Left ventricle myocardium inferior (tissue), 1 donor: ENCODE measurements at regions of chr19 and their contacts with region 1.

Region 1: GRCh38 chr19:3429581-3430080 is 50.7 kb downstream of the SMIM24 start:
- DNase-seq: peak; percentile 91
- H3K4me3 ChIP-seq: no peak overlapping the region
- H3K27ac ChIP-seq: peak overlapping the region; percentile 94
- H3K4me1 ChIP-seq: peaks cover 65% of the 10 kb centered on the region
- H3K27me3 ChIP-seq: no peaks in the 10 kb centered on the region
- CTCF ChIP-seq: peak; percentile 100

Region 2: DNA sequence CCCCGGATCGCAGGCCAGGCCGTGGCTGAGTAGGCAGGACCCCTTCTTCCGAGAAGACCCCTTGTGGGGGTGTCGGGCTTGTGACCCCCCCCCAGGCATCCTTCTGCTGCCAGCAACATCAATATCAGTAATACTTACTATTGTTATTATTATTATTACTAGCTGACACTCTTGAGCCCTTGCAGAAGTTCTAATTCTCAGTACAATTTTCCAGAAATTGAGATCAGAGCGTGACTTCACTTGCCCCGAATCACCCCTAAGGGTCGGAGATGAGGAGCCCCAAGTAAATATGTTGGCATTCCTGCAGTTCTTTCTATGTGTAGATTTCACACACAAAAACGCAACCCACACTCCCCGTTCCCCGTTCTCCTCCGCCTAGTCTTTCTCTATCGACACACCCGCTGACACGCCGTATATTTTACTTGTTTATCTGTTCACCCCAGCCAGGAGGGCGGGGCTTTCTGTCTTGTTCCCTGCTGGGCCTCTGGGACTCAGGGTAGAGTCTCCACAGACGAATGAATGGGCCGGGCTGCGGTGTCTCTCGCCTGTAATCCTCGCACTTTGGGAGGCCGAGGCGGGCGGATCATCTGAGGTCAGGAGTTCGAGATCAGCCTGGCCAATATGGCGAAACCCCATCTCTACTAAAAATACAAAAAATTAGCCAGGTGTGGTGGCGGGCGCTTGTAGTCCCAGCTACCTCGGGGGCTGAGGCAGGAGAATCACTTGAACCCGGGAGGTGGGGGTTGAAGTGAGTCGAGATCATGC is 382.0 kb before region 1 on chr19:
- intact Hi-C with region 1: no loop called
- DNase-seq: peak; percentile 79
- H3K4me3 ChIP-seq: peak overlapping the region; percentile 65
- H3K27ac ChIP-seq: peak overlapping the region; percentile 78
- H3K4me1 ChIP-seq: peaks cover 14% of the 10 kb centered on the region
- H3K27me3 ChIP-seq: no peaks in the 10 kb centered on the region
- CTCF ChIP-seq: no peak

Region 3: DNA sequence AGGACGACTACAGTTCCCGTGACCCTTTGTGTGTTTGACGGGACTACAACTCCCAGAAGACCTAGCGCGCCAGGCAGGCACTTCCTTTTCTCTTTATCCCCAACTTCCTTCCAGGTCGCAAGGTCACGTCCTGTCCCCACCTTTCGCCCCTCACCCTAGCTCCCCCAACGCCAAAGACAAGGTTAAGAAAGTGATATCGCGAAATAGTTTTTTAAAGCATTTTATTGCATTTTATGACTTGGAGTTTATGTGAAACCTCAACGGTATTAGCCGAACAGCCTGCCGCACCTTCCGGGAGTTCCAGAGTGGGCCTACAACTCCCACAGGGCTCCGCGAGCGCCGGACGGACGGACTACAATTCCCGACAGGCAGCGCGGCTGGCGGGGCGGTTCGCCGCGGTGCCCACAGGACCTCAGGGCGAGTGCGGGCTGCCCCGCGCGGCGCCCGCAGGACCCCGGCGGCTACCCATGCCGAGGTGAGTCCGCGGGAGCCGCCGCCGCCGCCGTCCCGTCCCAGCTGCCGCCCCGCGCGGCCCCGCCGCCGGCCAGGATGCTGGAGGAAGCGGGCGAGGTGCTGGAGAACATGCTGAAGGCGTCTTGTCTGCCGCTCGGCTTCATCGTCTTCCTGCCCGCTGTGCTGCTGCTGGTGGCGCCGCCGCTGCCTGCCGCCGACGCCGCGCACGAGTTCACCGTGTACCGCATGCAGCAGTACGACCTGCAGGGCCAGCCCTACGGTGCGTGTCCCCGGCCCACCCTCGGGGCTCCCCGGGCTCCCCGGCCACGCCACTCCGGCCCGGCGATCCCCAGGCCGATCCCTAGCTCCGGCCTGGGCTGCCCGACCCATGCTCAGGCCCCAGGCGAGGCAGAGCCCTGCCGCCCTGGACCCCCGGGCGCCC is 243.9 kb before region 1 on chr19 and contains the start of gene NCLN:
- intact Hi-C with region 1: no loop called
- DNase-seq: peak; percentile 95
- H3K4me3 ChIP-seq: peak within 1 kb of the TSS; percentile 87
- H3K27ac ChIP-seq: peak within 1 kb of the TSS; percentile 92
- H3K4me1 ChIP-seq: peaks cover 44% of the 10 kb centered on the region
- H3K27me3 ChIP-seq: no peaks in the 10 kb centered on the region
- CTCF ChIP-seq: no peak
- total RNA-seq, gene NCLN: 28.3 TPM

Region 4: DNA sequence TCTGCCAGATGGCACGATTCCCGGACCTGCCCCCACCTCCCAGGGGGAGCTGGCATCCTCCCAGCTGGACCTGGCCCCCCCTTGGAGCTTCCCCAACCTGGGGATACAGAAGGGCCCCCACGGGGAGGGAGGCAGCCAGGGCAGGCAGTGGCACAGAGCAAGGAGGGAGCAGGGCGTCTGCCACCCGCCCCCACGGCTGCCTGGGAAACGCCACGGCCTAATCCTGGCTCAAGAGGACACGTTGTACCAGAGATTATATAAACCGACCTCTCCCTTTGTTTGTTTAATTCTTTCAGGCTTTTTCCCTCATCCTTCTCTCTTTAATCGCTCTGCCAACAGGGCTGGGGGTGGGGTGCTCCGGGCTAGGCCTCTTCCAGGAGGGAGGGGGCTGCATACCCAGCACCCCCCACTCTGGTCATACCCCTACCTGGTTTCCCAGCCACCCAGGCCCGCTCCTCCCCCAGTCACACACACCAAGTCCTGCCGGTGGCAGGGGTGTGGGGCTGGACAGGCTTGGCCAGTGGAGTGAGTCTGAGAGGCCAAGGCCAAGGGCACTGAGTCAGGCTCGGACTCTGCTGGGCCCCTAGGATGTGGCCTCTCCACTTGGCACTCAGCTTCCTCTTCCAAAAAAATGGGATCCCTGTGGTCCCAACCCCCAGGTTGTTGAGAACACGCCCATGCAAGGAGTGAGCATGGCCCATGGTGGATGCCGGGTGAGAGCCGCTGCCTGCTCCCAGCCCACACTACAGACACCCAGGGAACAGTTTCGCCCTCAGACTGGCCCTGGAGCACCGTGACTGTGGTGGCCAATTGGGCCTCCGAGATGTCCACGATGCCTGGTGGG is 92.7 kb before region 1 on chr19:
- intact Hi-C with region 1: loop called (anchors 10 kb)
- DNase-seq: peak; percentile 90
- H3K4me3 ChIP-seq: no peak overlapping the region
- H3K27ac ChIP-seq: peak overlapping the region; percentile 98
- H3K4me1 ChIP-seq: peaks cover 45% of the 10 kb centered on the region
- H3K27me3 ChIP-seq: no peaks in the 10 kb centered on the region
- CTCF ChIP-seq: no peak

Region 5: GRCh38 chr19:3365836-3366752 is 63.5 kb before region 1 on chr19 and contains the start of gene NFIC:
- intact Hi-C with region 1: loop called (anchors 10 kb)
- DNase-seq: peak; percentile 84
- H3K4me3 ChIP-seq: peak within 1 kb of the TSS; percentile 89
- H3K27ac ChIP-seq: peak within 1 kb of the TSS; percentile 97
- H3K4me1 ChIP-seq: peaks cover 96% of the 10 kb centered on the region
- H3K27me3 ChIP-seq: no peaks in the 10 kb centered on the region
- CTCF ChIP-seq: no peak
- total RNA-seq, gene NFIC: 145 TPM

Region 6: DNA sequence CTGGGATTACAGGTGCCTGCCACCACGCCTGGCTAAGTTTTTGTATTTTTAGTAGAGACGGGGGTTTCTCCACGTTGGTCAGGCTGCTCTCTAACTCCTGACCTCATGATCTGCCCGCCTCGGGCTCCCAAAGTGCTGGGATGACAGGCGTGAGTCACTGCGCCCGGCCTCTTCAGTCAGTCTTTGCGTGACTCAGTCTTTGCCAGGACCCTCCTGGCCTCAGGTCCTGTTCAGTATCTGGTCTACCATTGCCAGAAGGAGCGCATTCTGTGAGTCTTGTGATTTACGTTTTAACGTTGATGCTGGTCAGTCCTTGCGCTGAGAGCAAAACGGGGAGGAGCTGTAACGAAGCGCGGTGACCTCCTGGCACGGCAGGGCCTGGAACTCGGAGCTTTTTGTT is 135.5 kb after region 1 on chr19:
- intact Hi-C with region 1: no loop called
- DNase-seq: no peak
- H3K4me3 ChIP-seq: no peak overlapping the region
- H3K27ac ChIP-seq: no peak overlapping the region
- H3K4me1 ChIP-seq: no peaks in the 10 kb centered on the region
- H3K27me3 ChIP-seq: no peaks in the 10 kb centered on the region
- CTCF ChIP-seq: no peak